Heart right ventricle (tissue), 16 donors: ENCODE measurements at regions of chr7 and their contacts with region 1.

Region 1: DNA sequence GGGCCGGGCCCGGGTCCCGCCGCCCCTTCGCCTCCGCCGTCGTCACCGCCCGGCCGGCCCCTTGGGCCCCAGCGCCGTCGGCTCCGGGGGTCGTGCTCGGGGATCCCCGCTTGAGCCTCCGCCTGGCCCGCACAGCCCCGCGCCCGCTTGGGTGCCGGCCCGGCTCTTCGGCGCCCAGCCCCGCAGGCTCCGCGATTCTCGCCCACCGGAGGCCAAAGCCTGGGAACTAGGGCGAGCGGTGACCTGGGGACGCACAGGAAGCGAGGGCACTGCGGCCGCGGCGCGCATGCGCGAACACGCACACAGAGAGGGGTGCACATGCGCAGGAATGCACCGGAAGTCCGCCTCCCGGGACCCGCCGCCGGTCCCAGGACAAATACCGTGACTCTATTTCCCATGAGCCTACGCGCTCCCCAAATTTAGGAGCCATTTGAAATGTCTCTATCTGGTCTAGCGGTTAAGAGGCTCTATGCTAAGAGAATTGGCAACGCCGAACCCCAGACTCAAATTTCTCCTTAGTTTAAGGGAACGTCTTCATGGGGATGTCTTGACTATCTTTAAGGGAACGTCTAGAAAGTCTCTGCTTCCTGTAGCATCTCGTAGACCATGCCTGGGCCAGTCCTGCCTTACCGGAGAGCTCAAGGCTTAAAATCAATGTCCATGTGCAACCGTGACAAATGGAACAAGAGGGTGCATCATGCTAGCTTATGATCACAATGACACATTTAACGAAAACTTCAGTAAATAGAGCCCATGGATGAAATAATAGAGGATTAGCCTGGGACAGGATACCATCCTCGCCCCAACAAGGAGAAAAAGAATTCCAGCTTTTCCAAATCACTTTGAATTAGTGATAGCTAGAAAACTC is at the start of gene ZNF12:
- DNase-seq: peak; percentile 96 to 98
- ATAC-seq: peak; percentile 98 to 100 (median 100)
- H3K4me3 ChIP-seq: peak within 1 kb of the TSS; percentile 76 to 100 (median 93)
- H3K27ac ChIP-seq: peak within 1 kb of the TSS; percentile 84 to 98 (median 96)
- H3K4me1 ChIP-seq: peaks cover 9 to 39% (median 36%) of the 10 kb centered on the region in 9 donors
- H3K27me3 ChIP-seq: no peaks in the 10 kb centered on the region
- CTCF ChIP-seq: no peak
- total RNA-seq, gene ZNF12: 13.5 to 18.0 (median 16.3) TPM

Region 2: DNA sequence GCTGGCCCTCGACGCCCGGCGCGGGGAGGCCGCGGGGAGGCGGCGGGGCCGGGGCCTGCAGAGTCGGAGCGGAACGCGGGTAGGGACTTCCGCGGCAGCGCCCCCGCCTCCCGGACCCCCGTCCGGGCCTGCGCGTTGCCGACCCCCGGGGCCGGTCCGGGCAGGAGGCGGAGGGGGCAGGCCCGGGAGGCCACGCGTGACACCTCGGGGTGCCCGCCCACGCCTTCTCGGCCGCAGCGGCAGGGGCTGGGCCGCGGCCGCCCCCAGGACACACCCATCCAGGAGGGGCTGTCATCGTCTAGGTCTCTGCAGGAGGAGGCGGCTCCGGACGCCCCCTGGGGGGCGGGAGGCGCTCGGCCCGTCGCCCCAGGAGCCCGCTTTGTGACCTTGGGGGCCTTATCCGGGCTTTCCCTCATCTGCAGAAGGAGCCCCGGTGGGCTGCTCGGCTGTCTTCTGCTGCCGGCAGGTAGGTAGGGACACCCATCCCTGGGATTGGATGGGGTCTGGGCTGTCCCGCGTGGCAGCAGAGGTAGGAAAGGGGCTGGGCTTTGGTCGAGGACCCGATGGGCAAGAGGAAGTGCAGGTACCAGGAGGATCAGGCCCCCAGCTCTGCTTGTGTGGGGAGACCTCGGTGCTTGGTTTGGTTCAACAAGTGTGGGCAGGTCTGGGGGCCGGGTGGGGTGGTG is 69.2 kb before region 1 on chr7:
- intact Hi-C with region 1: loop called in 1 of 10 experiments (anchors 5 kb)
- DNase-seq: no peak
- ATAC-seq: peak in 6 of 8 donors; percentile 20 to 51 (median 38)
- H3K4me3 ChIP-seq: peak overlapping the region; percentile 64 to 98 (median 80)
- H3K27ac ChIP-seq: peak overlapping the region in 9 of 10 donors; percentile 52 to 83 (median 75)
- H3K4me1 ChIP-seq: peaks cover 4 to 36% (median 21%) of the 10 kb centered on the region in 9 donors
- H3K27me3 ChIP-seq: no peaks in the 10 kb centered on the region
- CTCF ChIP-seq: peak in 8 of 9 donors; percentile 7 to 51 (median 28)

Region 3: DNA sequence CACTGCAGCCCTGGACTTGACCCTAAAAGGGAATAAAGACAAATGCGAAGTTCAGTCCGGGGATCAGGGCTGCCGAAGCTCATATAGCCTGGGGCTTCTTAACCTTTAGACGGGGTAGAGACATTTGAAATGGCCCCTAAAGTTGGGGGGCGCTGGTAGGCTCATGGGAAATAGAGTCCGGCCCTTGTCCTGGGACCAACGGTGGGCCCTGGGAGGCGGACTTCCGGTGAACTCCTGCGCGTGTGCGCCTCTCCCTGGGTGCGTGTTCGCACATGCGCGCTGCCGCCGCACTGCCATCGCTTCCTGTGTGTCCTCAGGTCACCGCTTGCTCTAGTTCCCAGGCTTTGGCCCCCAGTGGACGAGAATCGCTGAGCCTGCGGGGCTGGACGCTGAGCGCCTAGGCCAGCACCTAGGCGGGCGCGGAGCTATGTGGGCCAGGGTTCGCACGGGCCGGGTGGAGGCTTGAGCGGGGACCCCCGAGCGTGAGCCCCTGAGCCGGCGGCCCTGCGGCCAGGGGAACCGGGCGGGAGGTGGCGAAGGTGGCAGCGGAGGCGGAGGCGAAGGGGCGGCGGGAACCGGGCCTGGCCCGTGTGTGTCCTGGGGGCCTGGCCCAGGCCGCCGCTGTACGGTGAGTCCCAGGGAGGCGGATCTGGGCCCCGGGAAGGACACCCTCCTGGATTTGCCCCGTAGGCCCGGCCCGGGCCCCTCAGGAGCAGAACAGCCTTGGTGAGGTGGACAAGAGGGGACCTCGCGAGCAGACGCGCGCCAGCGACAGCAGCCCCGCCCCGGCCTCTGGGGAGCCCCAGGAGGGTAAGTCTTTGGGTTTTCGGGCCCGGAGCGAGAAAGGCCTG is 22.8 kb after region 1 on chr7:
- intact Hi-C with region 1: loop called in 2 of 10 experiments (anchors 1 to 2 kb)
- DNase-seq: peak; percentile 94 to 95
- ATAC-seq: peak; percentile 100
- H3K4me3 ChIP-seq: peak overlapping the region; percentile 73 to 100 (median 93)
- H3K27ac ChIP-seq: peak overlapping the region; percentile 73 to 98 (median 90)
- H3K4me1 ChIP-seq: peaks cover 4 to 17% (median 9%) of the 10 kb centered on the region in 9 donors
- H3K27me3 ChIP-seq: no peaks in the 10 kb centered on the region
- CTCF ChIP-seq: peak in 3 of 9 donors; percentile 8 to 17 (median 11)

Region 4: DNA sequence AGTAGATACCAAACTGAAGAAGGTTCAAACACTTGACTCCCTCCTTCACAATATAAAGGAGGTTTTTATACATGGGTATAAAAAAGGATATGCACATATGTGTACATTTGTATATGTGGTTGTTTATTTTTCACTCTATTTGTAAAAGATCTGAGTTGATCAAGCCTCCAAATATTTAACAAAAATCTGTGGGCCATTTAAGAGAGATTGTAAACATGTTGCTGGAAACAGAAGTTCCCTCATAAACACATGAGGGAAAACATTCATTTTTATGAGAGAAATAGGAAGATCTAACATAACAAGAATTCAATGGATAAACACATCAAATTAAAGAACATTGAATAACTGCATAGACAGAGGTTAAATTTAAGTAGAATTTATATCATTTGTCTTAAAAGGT is 747.1 kb after region 1 on chr7:
- intact Hi-C with region 1: no loop called
- DNase-seq: no peak
- ATAC-seq: no peak
- H3K4me3 ChIP-seq: no peak overlapping the region
- H3K27ac ChIP-seq: no peak overlapping the region
- H3K4me1 ChIP-seq: no peaks in the 10 kb centered on the region
- H3K27me3 ChIP-seq: no peaks in the 10 kb centered on the region
- CTCF ChIP-seq: no peak